ENCODE measurements at regions of chr16 and their contacts with region 1.

Region 1: DNA sequence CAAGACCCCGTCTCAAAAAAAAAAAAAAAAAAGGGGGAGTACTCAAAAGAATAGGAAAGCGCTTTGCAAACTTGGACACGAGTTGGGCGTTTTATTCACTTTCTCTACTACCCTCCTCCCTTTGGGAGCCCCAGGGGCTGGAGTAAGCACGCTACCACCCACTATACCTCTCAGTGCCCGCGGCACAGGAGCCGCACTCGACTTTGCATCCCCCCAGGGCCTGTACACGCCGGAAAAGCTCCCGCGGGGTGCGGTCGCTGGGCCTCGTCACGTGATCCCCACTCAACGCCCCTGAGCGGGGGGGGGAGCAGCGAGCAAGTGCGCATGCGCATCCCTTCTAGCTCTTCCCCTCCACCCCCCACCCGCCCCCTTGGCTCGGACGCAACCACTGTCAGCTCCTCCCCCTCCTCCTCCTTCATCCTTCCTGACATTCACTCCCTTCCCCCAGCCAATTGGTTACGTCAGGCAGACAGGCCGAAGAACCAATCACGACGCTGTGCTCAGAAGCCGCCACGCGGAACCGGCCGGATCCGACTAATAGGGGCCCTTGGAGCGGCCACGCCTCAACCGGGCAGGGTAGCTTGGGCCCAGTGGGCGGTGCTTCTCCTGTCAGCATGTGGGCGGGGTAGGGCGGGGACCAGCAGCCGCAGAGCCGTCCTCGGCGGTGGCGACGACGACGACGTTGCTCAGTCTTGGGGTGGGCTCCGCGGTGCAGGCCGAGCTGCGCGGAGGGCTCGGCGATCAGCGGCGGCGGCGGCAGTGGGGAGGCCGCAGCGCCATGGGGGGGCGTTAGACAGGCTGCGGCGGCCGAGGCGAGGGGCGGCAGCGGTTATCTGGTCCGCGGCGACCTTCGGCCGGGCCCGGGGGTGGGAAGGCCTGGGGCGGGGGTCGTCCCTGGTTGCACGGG is at the start of gene HAPSTR1:
- DNase-seq: peak; percentile 97 to 100 (median 98)
- ATAC-seq: peak; percentile 93
- H3K4me3 ChIP-seq: peak within 1 kb of the TSS; percentile 95
- H3K27ac ChIP-seq: peak within 1 kb of the TSS; percentile 97
- H3K4me1 ChIP-seq: peaks cover 20 to 24% of the 10 kb centered on the region in 2 experiments
- H3K27me3 ChIP-seq: no peaks in the 10 kb centered on the region
- CTCF ChIP-seq: no peak
- EP300 ChIP-seq: peak; percentile 16; the same call in 1 of the 2 replicates
- POLR2A ChIP-seq: peak; percentile 92
- RAD21 ChIP-seq: no peak
- polyA plus RNA-seq, gene HAPSTR1: 10.8 to 17.4 TPM

Region 2: GRCh38 chr16:8998114-8998513 is 93.1 kb before region 1 on chr16:
- CTCF ChIA-PET with region 1: no interaction called
- POLR2A ChIA-PET with region 1: no interaction called
- in situ Hi-C with region 1: no loop called
- intact Hi-C with region 1: no loop called
- DNase-seq: no peak
- ATAC-seq: no peak
- H3K4me3 ChIP-seq: no peak overlapping the region
- H3K27ac ChIP-seq: no peak overlapping the region
- H3K4me1 ChIP-seq: no peaks in the 10 kb centered on the region; a peak in 1 of 5 replicates
- H3K27me3 ChIP-seq: no peaks in the 10 kb centered on the region
- CTCF ChIP-seq: no peak
- EP300 ChIP-seq: no peak
- POLR2A ChIP-seq: no peak
- RAD21 ChIP-seq: no peak

Region 3: GRCh38 chr16:9033125-9033830 is 57.9 kb before region 1 on chr16:
- CTCF ChIA-PET with region 1: no interaction called
- POLR2A ChIA-PET with region 1: no interaction called
- in situ Hi-C with region 1: no loop called
- intact Hi-C with region 1: no loop called
- DNase-seq: peak; percentile 36 to 67 (median 47)
- ATAC-seq: peak; percentile 75
- H3K4me3 ChIP-seq: no peak overlapping the region
- H3K27ac ChIP-seq: no peak overlapping the region
- H3K4me1 ChIP-seq: no peaks in the 10 kb centered on the region
- H3K27me3 ChIP-seq: peaks cover 0 to 3% of the 10 kb centered on the region in 2 experiments; a peak in 1 of 5 replicates
- CTCF ChIP-seq: peak; percentile 48 to 58 (median 54)
- EP300 ChIP-seq: no peak
- POLR2A ChIP-seq: no peak
- RAD21 ChIP-seq: peak in 1 of 2 experiments; percentile 54; a peak in 2 of 4 replicates

Region 4: GRCh38 chr16:9053006-9053601 is 38.1 kb before region 1 on chr16:
- CTCF ChIA-PET with region 1: no interaction called
- POLR2A ChIA-PET with region 1: interaction called, 3 read pairs
- in situ Hi-C with region 1: no loop called
- intact Hi-C with region 1: loop called (anchors 5 kb)
- DNase-seq: peak; percentile 79 to 96 (median 84)
- ATAC-seq: peak; percentile 96
- H3K4me3 ChIP-seq: peak overlapping the region; percentile 23; the same call in 1 of the 2 replicates
- H3K27ac ChIP-seq: peak overlapping the region; percentile 45
- H3K4me1 ChIP-seq: peaks cover 9 to 12% of the 10 kb centered on the region in 2 experiments; a peak in 3 of 5 replicates
- H3K27me3 ChIP-seq: no peaks in the 10 kb centered on the region
- CTCF ChIP-seq: no peak
- EP300 ChIP-seq: no peak
- POLR2A ChIP-seq: peak; percentile 75
- RAD21 ChIP-seq: no peak

Region 5: DNA sequence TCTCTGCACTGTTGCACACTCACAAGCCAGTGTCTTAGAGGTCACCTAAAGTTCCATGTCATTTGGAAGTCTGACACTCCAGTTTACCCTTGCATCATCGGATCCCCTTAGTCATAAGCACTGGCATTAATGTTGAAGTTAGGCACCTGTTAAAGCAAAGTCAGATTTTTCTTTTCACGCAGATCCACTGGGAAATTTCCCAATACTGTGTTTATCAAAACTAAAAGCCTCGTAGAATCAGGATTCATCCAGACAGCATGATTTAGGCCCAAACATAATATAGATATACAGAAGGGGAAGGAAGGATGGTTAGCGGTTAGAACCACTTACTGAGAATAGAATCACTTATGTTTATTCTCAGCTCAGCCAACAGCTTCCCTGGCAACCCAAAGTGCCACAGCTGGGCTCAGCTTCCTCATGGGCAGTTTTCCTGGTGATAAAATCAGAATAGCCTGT is 29.8 kb before region 1 on chr16:
- CTCF ChIA-PET with region 1: no interaction called
- POLR2A ChIA-PET with region 1: interaction called, 5 read pairs
- in situ Hi-C with region 1: no loop called
- intact Hi-C with region 1: loop called (anchors 2 kb)
- DNase-seq: no peak
- ATAC-seq: peak; percentile 25; the same call in 2 of the 3 replicates
- H3K4me3 ChIP-seq: no peak overlapping the region
- H3K27ac ChIP-seq: no peak overlapping the region; the same call in 2 of the 3 replicates
- H3K4me1 ChIP-seq: peaks cover 0 to 5% of the 10 kb centered on the region in 2 experiments; a peak in 3 of 5 replicates
- H3K27me3 ChIP-seq: no peaks in the 10 kb centered on the region
- CTCF ChIP-seq: no peak
- EP300 ChIP-seq: no peak
- POLR2A ChIP-seq: no peak
- RAD21 ChIP-seq: no peak

Region 6: DNA sequence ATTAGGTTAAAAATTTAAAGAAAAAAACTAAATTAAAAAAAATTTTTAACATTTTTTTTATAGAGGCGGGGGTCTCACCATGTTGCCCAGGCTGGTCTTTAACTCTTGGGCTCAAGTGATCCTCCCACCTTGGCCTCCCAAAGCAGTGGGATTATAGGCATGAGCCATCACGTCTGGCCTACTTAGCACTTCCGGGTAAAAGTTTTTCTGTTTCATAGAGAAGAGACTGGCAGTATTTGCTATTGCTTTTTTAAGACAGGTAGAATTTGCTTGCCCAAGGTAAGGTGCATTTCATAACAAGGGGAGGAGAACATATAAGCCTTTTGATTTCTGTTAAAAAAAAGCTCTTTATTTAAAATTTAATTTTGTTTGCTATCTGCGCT is 11.8 kb before region 1 on chr16:
- CTCF ChIA-PET with region 1: no interaction called
- POLR2A ChIA-PET with region 1: interaction called, 69 read pairs
- in situ Hi-C with region 1: no loop called
- intact Hi-C with region 1: loop called (anchors 1 kb)
- DNase-seq: no peak
- ATAC-seq: no peak
- H3K4me3 ChIP-seq: no peak overlapping the region
- H3K27ac ChIP-seq: peak overlapping the region; percentile 91
- H3K4me1 ChIP-seq: peaks cover 23 to 43% of the 10 kb centered on the region in 2 experiments
- H3K27me3 ChIP-seq: no peaks in the 10 kb centered on the region
- CTCF ChIP-seq: no peak
- EP300 ChIP-seq: no peak
- POLR2A ChIP-seq: no peak
- RAD21 ChIP-seq: no peak

Region 7: DNA sequence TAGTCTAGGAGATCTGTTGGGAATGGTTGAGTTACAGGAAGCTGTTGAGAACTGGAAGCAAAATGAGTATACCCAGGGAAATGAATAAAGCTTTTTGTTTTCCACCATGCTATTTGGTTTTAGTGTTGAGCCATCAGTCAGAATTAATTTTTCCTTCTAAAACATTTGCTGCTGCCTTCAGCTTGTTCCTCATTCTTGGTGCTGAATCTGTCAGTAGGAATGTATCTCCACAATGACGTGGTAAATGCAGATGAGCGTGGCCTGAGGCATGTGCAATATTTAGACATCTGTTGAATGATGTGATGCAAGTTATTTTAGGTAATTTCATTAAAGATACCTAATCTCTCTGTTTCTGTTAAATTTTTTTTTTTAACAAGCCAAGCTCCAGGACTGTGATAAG is 11.2 kb after region 1 on chr16:
- CTCF ChIA-PET with region 1: no interaction called
- POLR2A ChIA-PET with region 1: interaction called, 48 read pairs
- in situ Hi-C with region 1: no loop called
- intact Hi-C with region 1: no loop called
- DNase-seq: no peak
- ATAC-seq: no peak
- H3K4me3 ChIP-seq: no peak overlapping the region
- H3K27ac ChIP-seq: no peak overlapping the region
- H3K4me1 ChIP-seq: peaks cover 5 to 34% of the 10 kb centered on the region in 2 experiments; a peak in 3 of 5 replicates
- H3K27me3 ChIP-seq: no peaks in the 10 kb centered on the region
- CTCF ChIP-seq: no peak
- EP300 ChIP-seq: no peak
- POLR2A ChIP-seq: no peak
- RAD21 ChIP-seq: no peak